ENCODE measurements at regions of chr4 and their contacts with region 1.

Region 1: GRCh38 chr4:6794189-6794588 is 11.7 kb downstream of the KIAA0232 start:
- DNase-seq: no peak
- ATAC-seq: no peak
- H3K4me3 ChIP-seq: no peak overlapping the region
- H3K27ac ChIP-seq: no peak overlapping the region
- H3K4me1 ChIP-seq: peaks cover 63% of the 10 kb centered on the region
- H3K27me3 ChIP-seq: no peaks in the 10 kb centered on the region
- CTCF ChIP-seq: no peak

Region 2: GRCh38 chr4:6848717-6849305 is 54.6 kb after region 1 on chr4:
- intact Hi-C with region 1: loop called in 1 of 2 experiments (anchors 5 kb)
- DNase-seq: no peak
- ATAC-seq: peak; percentile 53 to 77 (median 68)
- H3K4me3 ChIP-seq: no peak overlapping the region
- H3K27ac ChIP-seq: peak overlapping the region; percentile 39
- H3K4me1 ChIP-seq: peaks cover 48% of the 10 kb centered on the region
- H3K27me3 ChIP-seq: no peaks in the 10 kb centered on the region
- CTCF ChIP-seq: no peak

Region 3: DNA sequence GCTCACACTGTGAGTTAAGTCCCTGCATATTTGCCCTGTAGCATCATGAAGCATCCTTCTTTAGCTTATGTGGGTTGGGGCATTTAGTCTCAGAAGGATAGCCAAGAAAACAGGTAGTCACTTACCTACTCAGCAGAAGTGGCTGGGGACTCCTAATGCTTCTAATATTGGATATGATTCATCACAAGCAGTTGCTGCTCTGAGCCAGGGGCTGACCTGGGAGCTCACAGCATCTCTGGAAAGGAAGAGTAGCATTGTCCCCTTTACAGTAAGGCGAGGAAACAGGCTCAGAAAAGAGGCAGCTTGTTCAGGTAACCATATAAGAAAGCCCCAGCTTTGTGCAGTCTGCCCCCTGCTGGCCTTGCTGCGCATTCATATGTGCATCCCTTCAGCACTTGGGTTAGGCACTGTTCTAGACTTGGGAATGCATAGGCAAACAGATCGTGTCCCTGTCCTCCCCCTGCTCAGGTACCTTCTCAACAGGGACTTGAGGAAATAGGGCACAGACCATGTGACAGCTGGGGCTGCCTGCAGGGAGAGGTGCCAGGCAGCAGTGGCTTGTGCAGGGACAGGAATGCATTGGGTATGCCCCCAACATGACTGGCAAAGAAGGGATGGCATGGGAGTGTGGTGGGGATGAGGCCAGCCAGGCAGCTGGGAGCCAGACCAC is 79.7 kb after region 1 on chr4:
- intact Hi-C with region 1: loop called in 1 of 2 experiments (anchors 5 kb)
- DNase-seq: peak; percentile 70 to 85
- ATAC-seq: peak; percentile 44 to 62 (median 52)
- H3K4me3 ChIP-seq: no peak overlapping the region
- H3K27ac ChIP-seq: peak overlapping the region; percentile 79
- H3K4me1 ChIP-seq: peaks cover 56% of the 10 kb centered on the region
- H3K27me3 ChIP-seq: no peaks in the 10 kb centered on the region
- CTCF ChIP-seq: peak; percentile 75

Measured in psoas muscle (tissue), 8 donors.